ENCODE measurements at regions of chr18 and their contacts with region 1.

Region 1: GRCh38 chr18:23918401-23919032 is 96.0 kb upstream of the TTC39C start:
- DNase-seq: peak; percentile 84
- H3K4me3 ChIP-seq: no peak overlapping the region
- H3K27ac ChIP-seq: no peak overlapping the region
- H3K4me1 ChIP-seq: no peaks in the 10 kb centered on the region
- H3K27me3 ChIP-seq: no peaks in the 10 kb centered on the region
- CTCF ChIP-seq: peak; percentile 91

Region 2: GRCh38 chr18:23629444-23629946 is 289.0 kb before region 1 on chr18:
- CTCF ChIA-PET with region 1: no interaction called
- POLR2A ChIA-PET with region 1: no interaction called
- intact Hi-C with region 1: loop called (anchors 10 kb)
- DNase-seq: no peak
- H3K4me3 ChIP-seq: no peak overlapping the region
- H3K27ac ChIP-seq: no peak overlapping the region
- H3K4me1 ChIP-seq: no peaks in the 10 kb centered on the region
- H3K27me3 ChIP-seq: no peaks in the 10 kb centered on the region
- CTCF ChIP-seq: no peak

Region 3: DNA sequence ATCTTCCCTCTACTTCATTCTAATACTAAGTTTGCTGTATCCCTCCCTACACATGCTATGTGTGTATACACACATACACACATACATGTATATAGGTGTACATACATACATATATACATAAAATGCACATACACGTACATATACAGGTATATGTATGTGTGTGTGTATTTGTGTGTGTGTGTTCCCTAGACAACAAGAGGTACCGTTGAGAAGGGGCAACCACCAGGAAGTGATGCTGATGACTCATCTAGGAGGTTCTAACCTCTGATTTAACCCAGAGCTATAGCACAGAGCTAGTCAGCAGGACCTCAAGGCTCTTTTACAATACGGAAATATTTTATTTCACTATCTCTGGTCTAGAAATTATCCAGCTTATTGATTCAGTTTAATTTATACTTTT is 90.1 kb before region 1 on chr18:
- CTCF ChIA-PET with region 1: no interaction called
- POLR2A ChIA-PET with region 1: no interaction called
- intact Hi-C with region 1: loop called (anchors 5 kb)
- DNase-seq: peak; percentile 15
- H3K4me3 ChIP-seq: no peak overlapping the region
- H3K27ac ChIP-seq: no peak overlapping the region
- H3K4me1 ChIP-seq: no peaks in the 10 kb centered on the region
- H3K27me3 ChIP-seq: no peaks in the 10 kb centered on the region
- CTCF ChIP-seq: no peak

Region 4: GRCh38 chr18:24446953-24447538 is 528.5 kb after region 1 on chr18:
- CTCF ChIA-PET with region 1: no interaction called
- POLR2A ChIA-PET with region 1: no interaction called
- intact Hi-C with region 1: no loop called
- DNase-seq: no peak
- H3K4me3 ChIP-seq: no peak overlapping the region
- H3K27ac ChIP-seq: no peak overlapping the region
- H3K4me1 ChIP-seq: no peaks in the 10 kb centered on the region
- H3K27me3 ChIP-seq: no peaks in the 10 kb centered on the region
- CTCF ChIP-seq: no peak; the same call in 1 of the 2 replicates